Natural killer cell (primary cell): ENCODE measurements at regions of chr5 and their contacts with region 1.

Region 1: GRCh38 chr5:171961117-171961516 is 45.3 kb downstream of the FBXW11 start:
- DNase-seq: no peak
- ATAC-seq: no peak
- H3K4me3 ChIP-seq: no peak overlapping the region
- H3K4me3 Mint-ChIP-seq: no peak overlapping the region
- H3K27ac ChIP-seq: no peak overlapping the region
- H3K27ac Mint-ChIP-seq: no peak overlapping the region
- H3K4me1 ChIP-seq: peaks cover 17% of the 10 kb centered on the region
- H3K4me1 Mint-ChIP-seq: peaks cover 62 to 64% of the 10 kb centered on the region in 2 donors
- H3K27me3 ChIP-seq: no peaks in the 10 kb centered on the region
- H3K27me3 Mint-ChIP-seq: no peaks in the 10 kb centered on the region
- CTCF ChIP-seq: no peak

Region 2: GRCh38 chr5:171927345-171927941 is 33.7 kb before region 1 on chr5:
- intact Hi-C with region 1: loop called (anchors 5 kb)
- DNase-seq: no peak
- ATAC-seq: no peak
- H3K4me3 ChIP-seq: no peak overlapping the region
- H3K4me3 Mint-ChIP-seq: no peak overlapping the region
- H3K27ac ChIP-seq: no peak overlapping the region
- H3K27ac Mint-ChIP-seq: peak overlapping the region in 1 of 2 donors; percentile 77
- H3K4me1 ChIP-seq: peaks cover 10% of the 10 kb centered on the region
- H3K4me1 Mint-ChIP-seq: peaks cover 60 to 69% of the 10 kb centered on the region in 2 donors
- H3K27me3 ChIP-seq: no peaks in the 10 kb centered on the region
- H3K27me3 Mint-ChIP-seq: no peaks in the 10 kb centered on the region
- CTCF ChIP-seq: no peak

Region 3: DNA sequence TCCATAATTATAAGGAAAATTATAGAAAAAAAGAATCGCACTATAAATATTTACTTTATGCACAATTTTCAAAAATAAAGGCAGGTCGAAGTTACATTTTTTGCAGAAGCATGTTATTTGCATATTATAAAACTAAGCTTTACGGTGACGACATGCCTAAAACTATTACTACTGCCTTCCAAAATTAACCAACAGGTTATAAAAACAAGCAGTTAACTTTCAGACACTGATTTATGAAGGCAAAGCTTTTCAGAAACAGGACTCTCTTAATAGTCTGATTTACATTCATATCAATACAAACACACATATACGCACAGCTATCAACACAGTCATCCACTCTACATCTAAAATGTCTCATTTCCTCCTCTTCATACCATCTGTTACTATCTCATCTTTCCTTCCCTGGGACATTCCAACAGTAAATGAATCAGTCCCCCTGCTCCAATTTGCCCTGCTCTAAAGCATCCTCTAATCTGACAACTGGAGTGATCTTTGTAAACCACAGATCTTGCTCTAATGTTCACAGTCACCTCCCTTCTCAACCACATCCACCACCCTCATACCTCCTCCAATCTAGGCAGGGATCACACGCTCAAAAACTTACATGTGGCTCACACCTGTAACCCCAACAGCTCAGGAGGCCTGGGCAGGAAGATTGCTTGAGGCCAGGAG is 23.8 kb after region 1 on chr5:
- intact Hi-C with region 1: loop called (anchors 2 kb)
- DNase-seq: peak; percentile 58 to 76
- ATAC-seq: peak; percentile 86 to 98 (median 88)
- H3K4me3 ChIP-seq: no peak overlapping the region
- H3K4me3 Mint-ChIP-seq: peak overlapping the region; percentile 5
- H3K27ac ChIP-seq: peak overlapping the region; percentile 10
- H3K27ac Mint-ChIP-seq: peak overlapping the region; percentile 1 to 20
- H3K4me1 ChIP-seq: peaks cover 35% of the 10 kb centered on the region
- H3K4me1 Mint-ChIP-seq: peaks cover 42 to 46% of the 10 kb centered on the region in 2 donors
- H3K27me3 ChIP-seq: no peaks in the 10 kb centered on the region
- H3K27me3 Mint-ChIP-seq: no peaks in the 10 kb centered on the region
- CTCF ChIP-seq: no peak

Region 4: GRCh38 chr5:172006321-172007174 is 45.4 kb after region 1 on chr5 and contains the start of gene FBXW11:
- intact Hi-C with region 1: loop called (anchors 5 kb)
- DNase-seq: peak; percentile 90 to 98
- ATAC-seq: peak; percentile 88 to 95 (median 89)
- H3K4me3 ChIP-seq: peak within 1 kb of the TSS; percentile 72
- H3K4me3 Mint-ChIP-seq: peak within 1 kb of the TSS; percentile 100
- H3K27ac ChIP-seq: peak within 1 kb of the TSS; percentile 98
- H3K27ac Mint-ChIP-seq: peak within 1 kb of the TSS; percentile 98 to 100
- H3K4me1 ChIP-seq: peaks cover 26% of the 10 kb centered on the region
- H3K4me1 Mint-ChIP-seq: peaks cover 52 to 53% of the 10 kb centered on the region in 2 donors
- H3K27me3 ChIP-seq: no peaks in the 10 kb centered on the region
- H3K27me3 Mint-ChIP-seq: no peaks in the 10 kb centered on the region
- CTCF ChIP-seq: no peak
- total RNA-seq, gene FBXW11: 26.7 to 40.3 (median 39.5) TPM